Colonic mucosa (tissue), 4 donors: ENCODE measurements at regions of chr1 and their contacts with region 1.

Region 1: GRCh38 chr1:56578963-56579875 is at the start of gene PLPP3:
- DNase-seq: peak; percentile 83
- H3K4me3 ChIP-seq: peak within 1 kb of the TSS; percentile 94
- H3K27ac ChIP-seq: peak within 1 kb of the TSS; percentile 96
- H3K4me1 ChIP-seq: no peaks in the 10 kb centered on the region
- H3K27me3 ChIP-seq: no peaks in the 10 kb centered on the region
- CTCF ChIP-seq: peak; percentile 22
- total RNA-seq, gene PLPP3: 18.6 to 33.3 TPM

Region 2: GRCh38 chr1:56146449-56146848 is 432.8 kb before region 1 on chr1:
- intact Hi-C with region 1: loop called (anchors 10 kb)
- DNase-seq: no peak
- H3K4me3 ChIP-seq: no peak overlapping the region
- H3K27ac ChIP-seq: no peak overlapping the region
- H3K4me1 ChIP-seq: no peaks in the 10 kb centered on the region
- H3K27me3 ChIP-seq: no peaks in the 10 kb centered on the region
- CTCF ChIP-seq: no peak

Region 3: DNA sequence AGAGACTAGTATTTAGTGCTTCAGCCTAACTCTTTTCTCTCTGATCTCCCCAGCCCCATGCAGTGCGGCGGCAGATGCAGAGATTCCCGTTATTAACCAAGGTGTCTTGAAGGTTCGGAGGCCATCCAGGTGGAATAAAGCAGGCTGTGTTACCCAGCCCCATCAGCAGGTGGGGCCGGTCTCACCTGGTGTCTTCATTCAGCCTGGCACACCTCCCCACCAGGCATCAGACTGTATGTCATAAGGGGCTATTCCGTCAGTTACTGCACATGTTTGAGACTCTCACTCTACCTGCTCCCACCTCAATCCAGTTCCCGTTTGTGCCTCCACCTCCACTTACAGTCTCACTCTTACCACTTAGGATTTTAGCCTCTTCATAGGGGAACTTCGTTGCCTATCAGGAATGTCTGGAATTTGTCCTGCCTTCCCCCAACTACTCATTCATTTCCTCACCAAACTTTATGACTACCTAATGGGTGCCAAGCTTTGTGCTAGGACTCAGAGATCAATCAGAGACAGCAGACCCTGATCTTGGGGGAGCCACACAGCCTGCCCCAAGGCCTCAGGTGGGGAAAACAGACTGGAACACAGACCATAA is 170.0 kb before region 1 on chr1:
- intact Hi-C with region 1: loop called (anchors 2 kb)
- DNase-seq: peak; percentile 70
- H3K4me3 ChIP-seq: no peak overlapping the region
- H3K27ac ChIP-seq: no peak overlapping the region
- H3K4me1 ChIP-seq: no peaks in the 10 kb centered on the region
- H3K27me3 ChIP-seq: no peaks in the 10 kb centered on the region
- CTCF ChIP-seq: peak; percentile 59

Region 4: DNA sequence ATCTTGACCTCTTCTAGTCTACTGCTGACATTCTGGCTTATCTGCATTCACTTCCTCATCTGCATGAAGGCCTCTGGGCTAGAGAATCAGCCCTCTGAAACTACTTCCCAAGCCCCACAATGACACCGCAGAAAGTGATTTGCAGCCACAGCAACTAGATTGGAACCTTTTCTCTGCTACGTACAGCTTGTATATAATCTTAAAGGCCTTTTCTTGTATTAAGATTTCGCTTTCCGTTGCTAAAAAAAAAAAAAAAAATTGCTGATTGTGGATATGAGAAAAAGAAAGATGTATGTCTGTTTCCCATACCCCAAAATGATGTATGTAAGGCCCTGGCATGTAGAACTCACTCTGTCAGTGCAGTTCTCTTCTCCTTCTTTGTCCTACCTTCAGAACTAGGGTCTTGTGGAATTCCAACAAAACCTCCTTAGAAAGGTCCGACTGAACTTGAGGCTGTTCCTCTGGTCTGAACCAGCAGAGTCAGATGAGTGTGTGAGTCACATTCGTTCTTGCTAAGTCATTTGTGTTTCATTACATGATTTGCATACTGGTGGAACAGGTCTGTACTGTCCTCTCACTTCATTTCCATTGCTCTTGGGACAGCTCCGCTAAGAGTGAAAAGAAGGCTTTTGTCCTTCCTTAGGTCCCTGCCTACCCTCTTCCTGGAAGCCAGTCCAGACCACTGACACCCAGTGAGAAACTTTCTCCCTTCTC is 62.5 kb before region 1 on chr1:
- intact Hi-C with region 1: loop called (anchors 5 kb)
- DNase-seq: peak; percentile 74
- H3K4me3 ChIP-seq: no peak overlapping the region
- H3K27ac ChIP-seq: peak overlapping the region; percentile 65
- H3K4me1 ChIP-seq: peaks cover 4% of the 10 kb centered on the region
- H3K27me3 ChIP-seq: no peaks in the 10 kb centered on the region
- CTCF ChIP-seq: no peak